ENCODE measurements at regions of chr2 and their contacts with region 1.

Region 1: GRCh38 chr2:183759033-183759432 is 634.8 kb downstream of the NUP35 start:
- DNase-seq: no peak
- ATAC-seq: no peak
- H3K4me3 ChIP-seq: no peak overlapping the region
- H3K4me1 ChIP-seq: no peaks in the 10 kb centered on the region
- CTCF ChIP-seq: no peak

Region 2: GRCh38 chr2:183729380-183729779 is 29.7 kb before region 1 on chr2:
- intact Hi-C with region 1: loop called in 1 of 2 experiments (anchors 2 kb)
- DNase-seq: no peak
- ATAC-seq: no peak
- H3K4me3 ChIP-seq: no peak overlapping the region
- H3K4me1 ChIP-seq: no peaks in the 10 kb centered on the region
- CTCF ChIP-seq: no peak

Region 3: GRCh38 chr2:183881978-183882377 is 122.9 kb after region 1 on chr2:
- intact Hi-C with region 1: no loop called
- DNase-seq: no peak
- ATAC-seq: no peak
- H3K4me3 ChIP-seq: no peak overlapping the region
- H3K4me1 ChIP-seq: no peaks in the 10 kb centered on the region
- CTCF ChIP-seq: no peak